ENCODE measurements at regions of chr3 and their contacts with region 1.

Region 1: DNA sequence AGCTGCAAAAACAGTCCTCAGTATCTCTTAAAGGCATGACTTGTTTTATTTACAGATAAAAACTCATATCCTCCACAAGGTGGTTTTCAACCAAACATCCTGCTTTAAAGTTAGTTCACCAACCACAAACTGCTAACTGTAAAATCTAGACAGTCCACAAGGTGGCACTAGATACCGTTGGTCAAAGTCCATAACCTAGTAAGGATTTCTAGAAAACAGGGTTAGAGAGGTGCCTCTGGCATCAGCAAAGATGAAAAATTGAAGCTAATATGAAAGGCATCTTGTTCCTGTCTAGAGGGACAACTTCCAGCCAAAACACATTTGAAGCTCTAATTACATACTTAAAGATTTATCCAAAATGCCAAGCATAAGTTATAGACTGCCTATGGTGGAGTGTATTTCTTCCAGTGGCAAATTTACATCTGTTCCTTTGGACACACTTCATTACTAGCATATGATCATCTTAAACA is 56.0 kb downstream of the ZMAT3 start:
- DNase-seq: peak; percentile 65 to 92

Region 2: GRCh38 chr3:179322286-179323196 is 307.0 kb after region 1 on chr3 and contains the start of gene ZNF639:
- in situ Hi-C with region 1: loop called (anchors 25 kb)
- DNase-seq: peak; percentile 90 to 96

Region 3: GRCh38 chr3:179373938-179374337 is 358.4 kb after region 1 on chr3:
- in situ Hi-C with region 1: no loop called
- DNase-seq: no peak

Measured in T47D (cell line).